Natural killer cell (primary cell): ENCODE measurements at regions of chr3 and their contacts with region 1.

Region 1: DNA sequence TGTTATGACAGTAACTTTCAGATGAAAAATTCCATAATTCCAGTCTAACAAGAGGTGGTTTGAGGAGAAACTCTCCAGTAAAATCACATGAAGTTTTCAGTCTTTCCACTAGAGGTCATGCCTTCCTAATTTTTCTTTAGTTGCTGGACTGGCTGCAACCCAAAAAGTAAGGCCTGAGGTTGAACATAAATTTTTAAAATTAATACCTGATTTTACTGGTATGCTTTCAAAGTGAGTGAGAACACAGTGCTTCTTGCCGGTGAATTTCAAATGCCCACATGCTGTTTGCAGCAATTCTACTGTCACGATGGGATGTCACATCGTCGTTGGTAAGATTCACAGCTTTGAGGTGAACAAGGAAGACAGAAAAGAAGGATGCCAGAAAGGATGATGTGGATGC is 89.0 kb upstream of the FGF12 start:
- DNase-seq: peak in 1 of 2 donors; percentile 50
- ATAC-seq: no peak
- H3K4me3 ChIP-seq: no peak overlapping the region
- H3K4me3 Mint-ChIP-seq: no peak overlapping the region
- H3K27ac ChIP-seq: no peak overlapping the region
- H3K27ac Mint-ChIP-seq: no peak overlapping the region
- H3K4me1 ChIP-seq: no peaks in the 10 kb centered on the region
- H3K4me1 Mint-ChIP-seq: no peaks in the 10 kb centered on the region
- H3K27me3 ChIP-seq: no peaks in the 10 kb centered on the region
- H3K27me3 Mint-ChIP-seq: peaks cover 0 to 14% of the 10 kb centered on the region in 2 donors
- CTCF ChIP-seq: peak; percentile 13

Region 2: DNA sequence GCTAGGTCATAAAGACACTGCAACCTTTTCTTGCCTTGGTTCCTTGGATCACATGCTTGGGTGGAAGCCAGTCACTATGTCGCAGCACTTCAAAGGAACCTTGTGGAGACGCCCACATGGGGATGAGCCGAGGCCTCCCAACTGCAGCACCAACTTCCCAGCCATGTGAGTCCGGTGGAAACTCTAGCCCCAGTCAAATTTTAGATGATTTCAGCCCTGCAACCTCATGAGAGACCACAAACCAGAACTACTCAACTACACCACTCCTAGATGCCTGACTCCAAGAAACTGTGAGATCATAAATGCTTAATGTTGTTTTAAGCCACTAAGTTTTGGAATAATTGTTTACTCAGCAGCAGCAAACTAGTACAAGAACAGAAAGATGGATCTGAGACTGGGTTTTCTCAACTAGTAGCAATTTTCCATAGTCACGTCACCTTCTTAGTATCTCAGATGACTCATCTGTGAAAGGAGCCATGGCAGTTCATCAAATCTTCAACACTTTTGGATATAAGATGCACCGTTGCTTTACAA is 14.8 kb after region 1 on chr3:
- intact Hi-C with region 1: no loop called
- DNase-seq: no peak
- ATAC-seq: no peak
- H3K4me3 ChIP-seq: no peak overlapping the region
- H3K4me3 Mint-ChIP-seq: no peak overlapping the region
- H3K27ac ChIP-seq: no peak overlapping the region
- H3K27ac Mint-ChIP-seq: no peak overlapping the region
- H3K4me1 ChIP-seq: no peaks in the 10 kb centered on the region
- H3K4me1 Mint-ChIP-seq: no peaks in the 10 kb centered on the region
- H3K27me3 ChIP-seq: no peaks in the 10 kb centered on the region
- H3K27me3 Mint-ChIP-seq: no peaks in the 10 kb centered on the region
- CTCF ChIP-seq: no peak

Region 3: DNA sequence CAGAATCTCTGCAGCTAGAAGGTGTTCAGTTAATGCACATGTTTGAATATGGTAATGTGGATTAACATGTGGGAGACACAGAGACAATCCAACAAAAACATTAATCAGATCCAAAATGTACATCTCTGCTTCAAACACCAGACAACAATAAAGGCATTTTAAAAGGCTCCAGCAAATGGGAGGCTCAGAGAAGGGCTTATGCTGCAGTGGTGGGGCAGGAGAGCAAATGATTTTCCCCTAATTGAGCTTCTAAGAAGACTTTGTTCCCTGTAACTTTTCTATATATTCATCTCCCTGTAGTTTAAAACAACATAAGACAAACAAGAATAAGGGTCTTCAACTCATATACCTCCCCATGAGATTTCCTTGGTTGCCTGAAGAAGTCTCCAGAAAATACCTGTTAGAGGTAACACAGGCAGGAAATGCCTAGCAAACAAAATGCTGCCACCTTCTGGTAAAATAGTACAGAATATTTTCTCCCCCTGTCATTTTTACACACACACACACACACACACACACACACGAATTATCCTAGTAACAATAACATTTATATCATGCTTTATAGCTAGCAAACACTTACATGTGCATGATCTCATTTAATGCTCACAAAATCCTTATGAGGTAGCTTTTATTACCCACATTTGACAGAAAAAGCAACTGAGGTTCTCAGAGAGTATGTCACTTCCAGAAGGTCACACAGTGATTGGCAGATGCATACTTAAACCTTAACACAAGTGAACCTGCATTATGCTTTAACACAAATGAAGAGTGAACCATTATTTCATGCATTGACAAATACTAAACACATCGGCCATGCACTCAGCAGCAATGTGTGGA is 224.7 kb after region 1 on chr3:
- intact Hi-C with region 1: loop called (anchors 10 kb)
- DNase-seq: peak in 1 of 2 donors; percentile 47
- ATAC-seq: no peak
- H3K4me3 ChIP-seq: no peak overlapping the region
- H3K4me3 Mint-ChIP-seq: no peak overlapping the region
- H3K27ac ChIP-seq: no peak overlapping the region
- H3K27ac Mint-ChIP-seq: no peak overlapping the region
- H3K4me1 ChIP-seq: no peaks in the 10 kb centered on the region
- H3K4me1 Mint-ChIP-seq: no peaks in the 10 kb centered on the region
- H3K27me3 ChIP-seq: no peaks in the 10 kb centered on the region
- H3K27me3 Mint-ChIP-seq: no peaks in the 10 kb centered on the region
- CTCF ChIP-seq: no peak